ENCODE measurements at regions of chr1 and their contacts with region 1.

Region 1: GRCh38 chr1:117128323-117129079 is 7.0 kb upstream of the TRIM45 start:
- DNase-seq: no peak
- H3K4me3 Mint-ChIP-seq: no peak overlapping the region
- H3K27ac Mint-ChIP-seq: no peak overlapping the region
- H3K4me1 Mint-ChIP-seq: no peaks in the 10 kb centered on the region
- H3K27me3 Mint-ChIP-seq: peaks cover 6% of the 10 kb centered on the region

Region 2: DNA sequence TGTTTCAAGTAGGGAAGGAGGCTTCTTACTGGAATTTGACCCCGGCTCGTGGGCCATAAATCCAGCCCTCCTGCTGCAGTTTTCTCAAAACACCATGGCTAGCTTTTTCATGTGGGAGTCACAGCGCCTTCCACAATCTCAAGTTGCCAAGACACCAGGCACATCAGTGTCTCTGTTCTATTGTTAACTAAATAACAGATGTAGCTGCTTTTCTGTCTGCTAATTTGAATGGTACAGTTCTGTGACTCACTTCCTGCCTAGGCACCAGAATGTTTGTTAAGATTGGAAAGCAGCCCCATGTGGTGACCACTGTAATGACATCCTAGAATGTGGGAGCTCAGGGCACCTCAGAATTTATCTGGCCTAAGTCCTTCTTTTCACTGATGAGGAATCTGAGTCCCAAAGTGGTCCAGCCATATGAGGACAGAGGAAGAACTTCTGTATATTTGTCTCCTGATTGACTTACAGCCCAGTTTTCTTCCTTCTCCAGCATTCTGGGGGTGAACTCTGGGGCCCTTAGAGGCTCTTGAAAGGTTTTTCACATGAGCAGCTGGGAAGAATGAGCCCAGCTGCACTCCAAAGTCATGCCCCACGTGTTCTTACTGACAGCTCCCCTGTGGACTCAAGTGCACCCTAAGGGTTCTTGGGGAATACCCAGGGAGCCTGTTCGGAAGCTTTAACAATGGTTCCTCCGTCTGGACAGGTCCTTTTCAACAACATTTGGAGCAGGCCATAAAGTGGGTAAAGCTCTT is 34.5 kb before region 1 on chr1:
- CTCF ChIA-PET with region 1: interaction called, 14 read pairs
- intact Hi-C with region 1: no loop called
- DNase-seq: peak; percentile 68
- H3K4me3 Mint-ChIP-seq: no peak overlapping the region
- H3K27ac Mint-ChIP-seq: no peak overlapping the region
- H3K4me1 Mint-ChIP-seq: peaks cover 20% of the 10 kb centered on the region
- H3K27me3 Mint-ChIP-seq: no peaks in the 10 kb centered on the region